Calu3 (cell line): ENCODE measurements at regions of chr6 and their contacts with region 1.

Region 1: GRCh38 chr6:24359640-24360454 is 2.0 kb upstream of the DCDC2 start:
- DNase-seq: peak; percentile 99
- H3K4me3 Mint-ChIP-seq: peak overlapping the region; percentile 80
- H3K27ac Mint-ChIP-seq: peak overlapping the region; percentile 100
- H3K4me1 Mint-ChIP-seq: peaks cover 20% of the 10 kb centered on the region
- H3K27me3 Mint-ChIP-seq: no peaks in the 10 kb centered on the region
- CTCF ChIP-seq: peak; percentile 100

Region 2: GRCh38 chr6:24323632-24324337 is 36.1 kb before region 1 on chr6:
- CTCF ChIA-PET with region 1: interaction called, 5 read pairs
- intact Hi-C with region 1: loop called (anchors 5 kb)
- DNase-seq: no peak
- H3K4me3 Mint-ChIP-seq: peak overlapping the region; percentile 5
- H3K27ac Mint-ChIP-seq: peak overlapping the region; percentile 45
- H3K4me1 Mint-ChIP-seq: peaks cover 67% of the 10 kb centered on the region
- H3K27me3 Mint-ChIP-seq: no peaks in the 10 kb centered on the region
- CTCF ChIP-seq: no peak

Region 3: GRCh38 chr6:24340998-24341938 is 18.6 kb before region 1 on chr6:
- CTCF ChIA-PET with region 1: interaction called, 14 read pairs
- intact Hi-C with region 1: loop called (anchors 2 kb)
- DNase-seq: peak; percentile 67
- H3K4me3 Mint-ChIP-seq: peak overlapping the region; percentile 27
- H3K27ac Mint-ChIP-seq: peak overlapping the region; percentile 80
- H3K4me1 Mint-ChIP-seq: peaks cover 69% of the 10 kb centered on the region
- H3K27me3 Mint-ChIP-seq: no peaks in the 10 kb centered on the region
- CTCF ChIP-seq: no peak

Region 4: GRCh38 chr6:24385536-24386269 is 25.9 kb after region 1 on chr6:
- CTCF ChIA-PET with region 1: interaction called, 22 read pairs
- intact Hi-C with region 1: loop called (anchors 1 kb)
- DNase-seq: peak; percentile 60
- H3K4me3 Mint-ChIP-seq: peak overlapping the region; percentile 3
- H3K27ac Mint-ChIP-seq: peak overlapping the region; percentile 72
- H3K4me1 Mint-ChIP-seq: peaks cover 66% of the 10 kb centered on the region
- H3K27me3 Mint-ChIP-seq: no peaks in the 10 kb centered on the region
- CTCF ChIP-seq: no peak

Region 5: GRCh38 chr6:24391756-24392405 is 32.0 kb after region 1 on chr6:
- CTCF ChIA-PET with region 1: interaction called, 22 read pairs
- intact Hi-C with region 1: no loop called
- DNase-seq: no peak
- H3K4me3 Mint-ChIP-seq: no peak overlapping the region
- H3K27ac Mint-ChIP-seq: no peak overlapping the region
- H3K4me1 Mint-ChIP-seq: peaks cover 16% of the 10 kb centered on the region
- H3K27me3 Mint-ChIP-seq: no peaks in the 10 kb centered on the region
- CTCF ChIP-seq: no peak

Region 6: GRCh38 chr6:24683297-24684296 is 323.8 kb after region 1 on chr6:
- CTCF ChIA-PET with region 1: no interaction called
- intact Hi-C with region 1: no loop called
- DNase-seq: no peak
- H3K4me3 Mint-ChIP-seq: no peak overlapping the region
- H3K27ac Mint-ChIP-seq: no peak overlapping the region
- H3K4me1 Mint-ChIP-seq: peaks cover 34% of the 10 kb centered on the region
- H3K27me3 Mint-ChIP-seq: no peaks in the 10 kb centered on the region
- CTCF ChIP-seq: no peak